ENCODE measurements at regions of chr22 and their contacts with region 1.

Region 1: DNA sequence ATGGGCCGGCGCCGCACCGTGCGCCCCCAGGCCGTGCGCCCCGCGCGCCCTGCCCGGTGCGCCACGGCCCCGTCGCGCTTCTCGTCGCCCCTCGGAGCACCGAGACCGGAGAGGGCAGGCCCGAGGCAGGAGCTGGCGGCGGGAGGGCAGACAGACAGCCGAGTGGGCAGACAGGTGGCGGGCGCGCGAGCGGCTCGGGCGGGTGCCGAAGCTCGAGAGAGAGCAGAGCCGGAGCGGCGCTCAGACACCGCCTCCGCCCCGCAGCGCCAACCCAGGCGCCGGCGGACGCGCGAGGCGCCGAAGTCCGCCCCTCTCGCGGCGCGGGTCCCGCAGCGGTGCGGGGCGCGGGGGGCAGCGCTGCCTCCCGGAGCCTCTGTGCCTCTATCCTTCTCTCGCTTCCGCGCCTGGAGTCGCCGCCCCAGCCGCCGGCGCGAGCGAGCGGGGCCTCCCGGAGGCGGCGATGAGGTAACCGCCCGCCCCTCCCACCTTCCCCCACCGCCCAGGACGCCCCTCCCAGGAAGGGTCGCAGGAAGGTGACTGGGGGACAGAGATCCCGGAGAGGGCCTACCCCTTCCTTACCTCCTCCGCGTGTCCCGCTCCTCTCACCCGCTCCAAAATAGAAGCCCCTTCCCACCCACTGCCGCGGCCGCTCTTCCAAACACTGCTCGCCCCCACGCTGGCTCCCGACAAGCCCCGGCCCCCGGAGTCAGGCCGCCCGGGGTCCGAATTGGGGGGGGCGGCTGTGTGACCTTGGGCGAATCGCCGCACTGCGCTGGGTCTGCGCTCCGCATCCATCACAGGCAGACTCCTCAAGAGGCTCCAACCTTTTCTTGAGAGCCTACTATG is at the start of gene RASL10A:
- DNase-seq: no peak
- H3K4me3 ChIP-seq: peak within 1 kb of the TSS in 1 of 4 donors; percentile 38
- H3K27ac ChIP-seq: no peak within 1 kb of the TSS
- H3K4me1 ChIP-seq: peaks cover 30 to 45% of the 10 kb centered on the region in 2 donors
- H3K27me3 ChIP-seq: peaks cover 22% of the 10 kb centered on the region
- CTCF ChIP-seq: no peak
- POLR2A ChIP-seq: no peak
- total RNA-seq, gene RASL10A: 0.33 to 3.7 (median 1.5) TPM

Region 2: DNA sequence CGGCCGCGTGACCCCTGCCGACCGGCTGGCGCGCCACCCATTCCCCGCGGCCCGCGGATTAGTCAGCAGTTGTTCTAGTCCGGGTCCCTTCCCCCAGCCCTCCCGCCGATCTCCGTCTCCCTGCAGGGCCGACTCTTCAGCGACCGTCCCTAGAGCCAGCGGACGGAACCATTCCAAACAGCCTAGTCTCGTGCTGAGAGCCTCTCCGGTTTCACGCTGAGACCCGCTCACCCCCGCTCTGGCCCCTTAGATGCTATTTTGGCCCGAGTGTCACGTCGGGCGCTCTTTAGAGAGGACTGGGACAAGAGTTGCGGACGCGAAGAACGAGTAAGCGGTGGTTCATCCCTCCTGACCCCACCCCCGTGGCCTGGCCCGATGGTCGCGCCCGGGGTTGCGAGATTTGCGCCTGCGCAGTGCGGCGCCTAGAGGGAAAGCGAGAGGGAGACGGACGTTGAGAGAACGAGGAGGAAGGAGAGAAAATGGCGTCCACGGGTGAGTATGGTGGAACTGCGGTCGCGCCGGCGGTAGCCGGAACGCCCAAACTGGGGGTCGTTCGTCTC is 47.6 kb before region 1 on chr22 and contains the starts of genes EWSR1 and RHBDD3:
- intact Hi-C with region 1: no loop called
- DNase-seq: peak; percentile 96 to 99 (median 98)
- H3K4me3 ChIP-seq: peak within 1 kb of the TSS; percentile 72 to 99 (median 90)
- H3K27ac ChIP-seq: peak within 1 kb of the TSS; percentile 99 to 100 (median 100)
- H3K4me1 ChIP-seq: peaks cover 51% of the 10 kb centered on the region in 2 donors
- H3K27me3 ChIP-seq: no peaks in the 10 kb centered on the region
- CTCF ChIP-seq: no peak
- POLR2A ChIP-seq: peak; percentile 74 to 95
- total RNA-seq, gene EWSR1: 152 to 302 (median 193) TPM
- total RNA-seq, gene RHBDD3: 27.4 to 103 (median 42.4) TPM

Region 3: DNA sequence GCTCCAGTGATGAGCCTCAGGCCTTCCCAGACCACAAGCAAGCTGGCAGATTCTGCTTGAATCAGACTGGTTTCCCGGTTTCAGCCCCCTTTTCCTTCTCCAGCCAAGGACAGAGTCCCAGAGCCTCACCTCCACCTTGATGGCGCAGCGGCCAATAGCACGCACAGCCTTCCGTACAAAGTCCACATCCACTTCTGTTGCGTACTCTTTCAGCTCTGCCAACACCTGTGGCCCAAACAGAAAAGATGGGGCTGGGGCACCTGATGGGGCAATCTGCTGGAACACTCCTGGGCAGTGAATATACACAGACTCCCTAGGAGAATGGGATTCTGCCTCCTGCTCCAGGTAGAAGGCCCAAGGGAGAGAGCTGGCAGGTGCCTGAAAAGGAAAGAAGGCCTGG is 35.5 kb after region 1 on chr22:
- intact Hi-C with region 1: loop called in 1 of 2 experiments (anchors 5 kb)
- DNase-seq: no peak
- H3K4me3 ChIP-seq: no peak overlapping the region
- H3K27ac ChIP-seq: no peak overlapping the region
- H3K4me1 ChIP-seq: no peaks in the 10 kb centered on the region
- H3K27me3 ChIP-seq: no peaks in the 10 kb centered on the region
- CTCF ChIP-seq: no peak
- POLR2A ChIP-seq: no peak

Region 4: DNA sequence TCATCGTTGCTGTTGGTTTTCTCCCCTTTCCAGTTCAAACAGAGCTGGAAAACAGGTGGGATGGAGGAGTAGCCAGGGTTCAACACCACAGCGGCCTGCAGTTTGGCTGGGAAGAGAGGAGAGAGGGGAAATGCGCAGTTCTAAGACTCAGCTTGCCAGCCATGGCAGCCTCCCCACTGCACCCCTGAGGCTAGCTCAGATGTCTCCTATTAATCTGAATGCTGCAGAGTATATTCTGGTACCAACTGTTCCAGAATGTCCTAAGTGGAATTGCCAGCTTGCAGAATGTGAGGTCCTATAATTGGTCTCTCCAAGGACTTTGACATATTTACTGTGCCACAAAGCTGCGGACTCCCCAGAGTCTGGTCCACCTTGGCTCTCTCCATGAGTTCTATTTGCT is 196.5 kb after region 1 on chr22:
- intact Hi-C with region 1: no loop called
- DNase-seq: no peak
- H3K4me3 ChIP-seq: no peak overlapping the region
- H3K27ac ChIP-seq: no peak overlapping the region
- H3K4me1 ChIP-seq: peaks cover under 1% of the 10 kb centered on the region in 2 donors
- H3K27me3 ChIP-seq: no peaks in the 10 kb centered on the region
- CTCF ChIP-seq: no peak
- POLR2A ChIP-seq: no peak

Measured in adrenal gland (tissue), 19 donors.